Activated CD4-positive, alpha-beta memory T cell treated with anti-CD3 and anti-CD28 coated beads, Interleukin-2, amount 10 ng/mL, durations not matched to agents 7 days and 5 days (primary cell): ENCODE measurements at regions of chr16 and their contacts with region 1.

Region 1: DNA sequence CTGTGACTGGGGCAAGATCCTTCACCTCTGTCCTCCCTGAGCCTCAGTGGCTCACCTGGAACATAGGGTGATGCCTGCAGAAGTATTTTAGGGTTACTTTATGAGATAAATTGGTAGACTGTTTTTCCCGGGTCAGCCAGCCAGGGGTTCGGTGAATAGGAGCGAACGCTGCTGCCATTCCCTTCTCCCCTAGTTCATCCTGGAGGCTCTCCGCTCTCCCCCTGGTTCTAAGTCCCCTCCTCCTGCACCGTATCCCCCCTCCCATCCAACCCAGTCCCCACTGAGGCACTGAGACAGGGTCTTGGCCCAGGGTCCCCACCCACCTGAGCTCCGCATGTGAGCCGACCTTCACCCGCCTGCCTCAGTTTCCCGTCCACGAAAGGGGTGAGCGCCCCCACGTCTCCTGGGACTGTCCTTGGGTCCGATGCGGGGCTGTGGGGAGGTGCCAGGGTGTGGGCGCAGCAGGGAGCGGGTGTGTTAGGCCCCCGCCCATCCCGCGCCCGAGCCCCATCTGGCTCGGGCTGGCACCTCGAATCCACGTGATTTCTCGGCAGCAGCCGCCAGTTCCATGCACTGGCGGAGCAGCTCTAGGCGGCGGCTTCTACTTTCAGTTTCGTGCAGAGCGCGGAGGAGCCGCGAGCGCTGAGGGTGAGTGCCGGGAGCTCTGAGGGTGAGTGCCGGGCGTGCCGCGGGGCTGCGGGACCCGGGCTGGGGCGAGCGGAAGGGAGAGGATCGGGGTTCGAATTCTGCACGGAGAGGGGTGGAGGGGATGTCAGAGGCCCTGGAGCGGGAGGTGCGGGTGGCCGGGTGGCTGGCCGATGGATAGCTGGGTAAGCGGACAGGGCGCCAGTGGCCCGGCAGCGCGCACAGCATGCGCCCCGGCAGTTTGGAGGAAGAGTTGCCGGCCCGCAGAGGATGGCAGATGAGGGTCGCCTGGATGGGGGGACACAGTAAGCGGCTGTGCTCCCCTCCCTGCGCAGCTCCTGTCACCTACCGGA is at the start of gene NLRC5:
- DNase-seq: peak; percentile 94
- H3K4me3 Mint-ChIP-seq: peak within 1 kb of the TSS; percentile 99
- H3K27ac Mint-ChIP-seq: peak within 1 kb of the TSS; percentile 100
- H3K4me1 Mint-ChIP-seq: peaks cover 71% of the 10 kb centered on the region
- H3K27me3 Mint-ChIP-seq: no peaks in the 10 kb centered on the region
- total RNA-seq, gene NLRC5: 259 to 263 TPM

Region 2: GRCh38 chr16:56814537-56815432 is 174.5 kb before region 1 on chr16:
- CTCF ChIA-PET with region 1: no interaction called
- POLR2A ChIA-PET with region 1: no interaction called
- DNase-seq: no peak
- H3K4me3 Mint-ChIP-seq: no peak overlapping the region
- H3K27ac Mint-ChIP-seq: no peak overlapping the region
- H3K4me1 Mint-ChIP-seq: peaks cover 8% of the 10 kb centered on the region
- H3K27me3 Mint-ChIP-seq: no peaks in the 10 kb centered on the region

Region 3: DNA sequence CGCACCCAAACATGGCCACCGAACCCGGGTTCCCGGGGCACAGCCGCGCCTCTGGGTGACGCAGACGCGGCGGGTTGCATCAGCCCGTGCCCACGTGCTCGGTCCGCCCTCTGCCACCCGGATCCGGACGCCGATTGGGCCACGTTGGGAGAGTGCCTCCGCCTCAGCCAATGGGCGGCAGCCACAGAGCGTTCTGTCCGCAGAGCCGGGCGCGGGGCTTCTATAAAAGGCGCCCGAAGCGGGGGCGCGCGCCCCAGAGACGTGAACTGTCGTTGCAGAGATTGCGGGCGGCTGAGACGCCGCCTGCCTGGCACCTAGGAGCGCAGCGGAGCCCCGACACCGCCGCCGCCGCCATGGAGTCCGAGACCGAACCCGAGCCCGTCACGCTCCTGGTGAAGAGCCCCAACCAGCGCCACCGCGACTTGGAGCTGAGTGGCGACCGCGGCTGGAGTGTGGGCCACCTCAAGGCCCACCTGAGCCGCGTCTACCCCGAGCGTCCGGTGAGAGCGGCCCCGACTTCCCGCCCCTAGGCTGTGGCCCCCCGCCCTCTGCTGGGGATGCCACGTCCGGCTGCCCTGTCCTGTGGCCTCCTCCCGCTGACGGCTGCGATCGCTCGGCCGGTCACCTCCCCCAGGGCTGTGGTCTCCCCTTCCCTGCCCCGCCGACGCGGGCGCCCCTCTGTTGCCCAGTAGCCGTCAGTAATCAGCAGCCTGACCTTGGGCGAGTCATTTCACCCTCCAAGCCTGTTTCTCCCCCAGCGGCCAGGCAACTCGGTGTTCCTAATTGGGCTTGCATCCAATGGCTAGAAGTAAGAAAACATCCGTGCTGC is 57.1 kb before region 1 on chr16 and contains the start of gene HERPUD1:
- CTCF ChIA-PET with region 1: no interaction called
- POLR2A ChIA-PET with region 1: interaction called, 51 read pairs
- DNase-seq: peak; percentile 99
- H3K4me3 Mint-ChIP-seq: peak within 1 kb of the TSS; percentile 98
- H3K27ac Mint-ChIP-seq: peak within 1 kb of the TSS; percentile 96
- H3K4me1 Mint-ChIP-seq: peaks cover 38% of the 10 kb centered on the region
- H3K27me3 Mint-ChIP-seq: peaks cover 2% of the 10 kb centered on the region
- total RNA-seq, gene HERPUD1: 166 to 171 TPM

Region 4: DNA sequence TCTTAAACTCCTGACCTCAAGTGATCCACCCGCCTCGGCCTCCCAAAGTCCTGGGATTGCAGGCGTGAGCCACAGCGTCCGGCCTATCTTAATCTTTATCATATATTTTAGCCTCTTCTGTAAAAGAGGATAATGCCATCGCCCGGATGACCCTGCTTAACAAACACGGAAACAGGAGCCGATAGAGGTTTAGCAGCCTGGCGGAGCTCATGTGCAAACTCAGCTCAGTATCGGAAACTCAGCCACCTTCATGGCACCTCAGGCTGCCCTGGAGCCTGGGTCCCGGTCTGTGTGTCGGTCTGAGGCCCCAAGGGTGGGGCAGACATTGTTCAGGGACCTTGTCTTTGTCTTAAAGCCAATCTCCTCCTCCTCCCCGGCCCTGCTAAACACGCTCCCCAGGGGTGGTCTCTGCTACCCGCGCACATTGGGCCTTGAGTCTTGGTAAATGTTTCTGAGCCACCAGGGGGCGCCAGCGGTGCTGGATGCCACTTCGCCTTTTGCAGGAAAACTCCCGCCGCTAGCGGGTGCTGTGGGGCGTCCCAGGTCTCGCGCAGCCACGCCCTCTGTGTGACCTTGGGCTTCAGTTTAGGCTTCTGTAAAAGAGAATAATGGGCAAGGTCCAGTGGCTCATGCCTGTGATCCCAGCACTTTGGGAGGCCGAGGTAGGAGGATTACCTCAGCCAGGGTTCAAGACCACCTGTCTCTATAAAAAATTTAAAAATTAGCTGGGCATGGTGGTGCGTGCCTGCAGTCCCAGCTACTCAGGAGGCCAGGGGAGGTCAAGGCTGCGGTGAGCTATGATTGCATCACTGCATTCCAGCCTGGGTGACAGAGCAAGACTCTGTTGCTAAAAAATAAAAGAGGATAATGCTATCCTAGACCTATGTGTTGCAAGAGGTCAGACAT is 24.8 kb before region 1 on chr16:
- CTCF ChIA-PET with region 1: interaction called, 22 read pairs
- POLR2A ChIA-PET with region 1: interaction called, 14 read pairs
- DNase-seq: peak; percentile 96
- H3K4me3 Mint-ChIP-seq: no peak overlapping the region
- H3K27ac Mint-ChIP-seq: no peak overlapping the region
- H3K4me1 Mint-ChIP-seq: peaks cover 19% of the 10 kb centered on the region
- H3K27me3 Mint-ChIP-seq: no peaks in the 10 kb centered on the region

Region 5: DNA sequence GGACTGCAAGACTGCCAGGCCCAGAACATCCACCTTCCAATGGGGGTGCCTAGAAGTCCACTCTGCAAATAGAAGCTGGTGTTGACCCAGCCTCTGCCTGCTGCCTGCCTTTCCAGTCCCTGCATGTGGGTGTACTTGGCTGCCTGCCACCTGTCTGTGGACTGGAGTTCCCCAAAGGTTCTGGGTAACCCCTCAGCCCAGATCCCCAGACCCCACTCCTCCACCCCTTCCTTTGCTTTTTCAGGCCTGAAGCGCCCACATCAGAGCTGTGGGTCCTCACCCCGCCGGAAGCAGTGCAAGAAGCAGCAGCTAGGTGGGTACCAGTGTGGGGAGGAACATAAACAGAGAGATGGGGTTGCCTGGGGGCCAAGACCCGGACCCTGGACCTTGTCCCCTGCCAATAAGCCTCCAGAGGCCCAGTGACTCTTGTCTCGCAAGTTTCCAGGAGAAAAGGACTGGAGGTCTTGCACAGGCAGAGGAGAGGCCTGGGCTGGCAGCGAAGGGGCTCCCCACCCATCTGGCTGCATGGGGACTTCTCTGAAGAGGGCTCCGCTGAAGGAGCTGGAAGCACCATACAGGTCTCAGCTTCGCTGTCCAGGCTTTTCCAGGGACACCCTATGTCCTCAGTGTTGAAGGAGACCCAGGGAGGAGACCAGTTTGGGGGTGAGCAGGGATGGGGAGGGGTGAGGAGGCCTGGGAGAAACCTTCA is 34.4 kb after region 1 on chr16:
- CTCF ChIA-PET with region 1: interaction called, 3 read pairs
- POLR2A ChIA-PET with region 1: interaction called, 17 read pairs
- DNase-seq: peak; percentile 42
- H3K4me3 Mint-ChIP-seq: no peak overlapping the region
- H3K27ac Mint-ChIP-seq: peak overlapping the region; percentile 58
- H3K4me1 Mint-ChIP-seq: peaks cover 48% of the 10 kb centered on the region
- H3K27me3 Mint-ChIP-seq: no peaks in the 10 kb centered on the region

Region 6: DNA sequence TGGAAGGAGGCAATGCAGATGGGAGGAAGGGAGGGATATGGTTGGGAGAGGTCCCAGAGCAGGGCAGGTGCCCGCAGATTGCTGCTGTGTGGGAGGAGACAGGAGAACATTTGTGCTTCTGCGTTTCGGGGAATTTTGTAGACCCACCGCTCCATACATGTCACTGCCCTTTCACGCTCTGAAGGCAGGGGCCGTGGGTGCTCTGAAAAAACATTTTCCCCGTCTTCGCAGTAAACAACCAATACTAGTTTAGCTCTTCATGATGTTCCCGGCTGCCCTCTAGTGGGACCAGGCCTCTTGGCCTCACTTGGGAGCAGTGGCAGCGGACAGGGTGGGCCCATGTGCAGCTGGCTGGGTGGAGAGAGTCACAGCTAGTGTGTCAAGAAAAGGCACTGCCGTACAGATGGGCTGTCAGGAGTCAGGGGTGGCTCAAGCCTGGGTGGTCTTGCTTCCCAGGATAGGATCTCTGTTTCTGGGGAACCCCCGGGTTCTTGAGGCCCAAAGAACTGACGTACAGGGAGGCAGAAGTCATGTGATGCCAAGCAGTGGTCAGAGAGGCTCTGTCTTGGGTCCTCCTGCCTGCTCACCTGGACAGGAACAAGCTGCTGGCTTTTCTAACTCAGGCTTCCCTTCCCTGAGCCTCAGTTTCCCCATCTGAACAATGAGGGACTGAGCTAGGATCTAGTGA is 56.6 kb after region 1 on chr16:
- CTCF ChIA-PET with region 1: interaction called, 11 read pairs
- POLR2A ChIA-PET with region 1: interaction called, 47 read pairs
- DNase-seq: no peak
- H3K4me3 Mint-ChIP-seq: no peak overlapping the region
- H3K27ac Mint-ChIP-seq: no peak overlapping the region
- H3K4me1 Mint-ChIP-seq: peaks cover 33% of the 10 kb centered on the region
- H3K27me3 Mint-ChIP-seq: no peaks in the 10 kb centered on the region